ENCODE measurements at regions of chr22 and their contacts with region 1.

Region 1: DNA sequence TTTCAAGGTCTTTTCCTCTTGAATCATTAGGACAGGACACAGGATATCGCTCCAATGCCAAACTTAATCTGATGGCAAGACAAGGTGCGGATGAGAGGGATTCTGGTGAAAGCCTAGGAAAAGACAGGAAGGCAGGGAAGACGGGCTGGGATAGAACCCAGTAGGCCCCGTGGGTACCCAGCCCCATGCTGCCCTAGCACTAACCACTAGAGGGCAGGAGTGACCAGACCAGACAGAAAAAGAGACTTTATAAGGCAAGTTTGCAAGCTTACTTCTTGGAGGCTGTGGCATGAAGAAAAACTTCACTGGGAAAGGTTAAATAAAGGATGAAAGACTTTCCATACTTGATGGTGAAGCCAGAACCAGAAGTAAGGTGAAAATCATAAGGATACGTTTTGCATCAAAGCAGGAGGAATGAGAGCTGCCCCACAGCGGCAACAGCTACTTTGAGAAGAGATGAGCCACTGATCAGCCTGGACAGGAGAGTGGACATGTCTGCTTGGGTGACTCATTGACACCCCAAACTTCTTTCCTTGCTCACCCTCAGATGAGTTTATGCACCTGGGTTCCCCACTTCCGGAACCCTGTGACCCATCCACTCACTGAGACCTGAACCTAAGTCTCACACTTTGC is 39.8 kb downstream of the SYN3 start:
- DNase-seq: no peak
- H3K4me3 ChIP-seq: no peak overlapping the region
- CTCF ChIP-seq: peak; percentile 78

Region 2: DNA sequence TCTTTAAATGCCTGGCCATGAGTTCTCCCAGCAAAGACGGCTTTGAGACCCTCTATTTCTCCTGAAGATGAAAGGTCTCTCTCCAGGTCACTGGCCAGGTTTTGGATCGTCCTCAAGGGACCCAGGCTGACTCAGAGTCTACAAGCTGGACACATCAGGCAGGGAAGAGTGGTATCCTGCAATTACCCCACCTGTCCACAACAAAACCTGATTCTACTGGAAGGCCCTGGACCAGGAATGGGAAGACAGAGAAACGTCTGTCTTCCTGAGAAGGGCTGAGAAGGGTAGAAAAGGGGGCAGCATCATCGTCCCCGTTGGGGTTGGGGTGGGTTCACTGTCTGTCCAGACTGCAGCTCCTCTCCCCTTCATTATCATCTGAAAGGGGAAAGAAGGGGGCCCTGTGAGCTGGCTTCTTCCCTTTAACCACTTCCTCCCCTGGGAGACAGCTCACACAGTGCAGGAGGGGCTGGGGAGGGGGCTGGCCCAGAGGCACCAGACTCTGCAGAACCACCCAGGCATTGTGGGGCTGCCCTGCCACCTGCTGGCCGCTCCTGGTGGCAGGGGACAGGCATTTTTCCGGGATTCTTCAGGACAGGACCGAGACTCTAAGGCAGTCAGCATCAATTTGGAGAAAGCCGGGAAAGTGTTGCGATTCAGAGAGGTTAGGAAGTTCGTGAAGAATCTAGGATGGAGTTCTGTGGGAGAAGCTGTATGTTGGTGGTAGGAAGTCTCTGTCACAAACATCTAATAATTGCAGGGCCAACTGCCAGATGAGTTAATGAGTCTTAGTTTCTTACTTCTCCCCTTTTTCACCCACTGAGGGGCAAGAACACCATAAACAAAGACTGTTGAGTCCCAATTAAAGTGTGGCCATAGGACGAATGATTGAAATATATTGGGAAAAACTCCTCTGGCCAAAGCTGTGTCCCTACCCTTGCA is 17.7 kb before region 1 on chr22:
- CTCF ChIA-PET with region 1: interaction called, 19 read pairs
- POLR2A ChIA-PET with region 1: no interaction called
- DNase-seq: no peak
- H3K4me3 ChIP-seq: no peak overlapping the region
- CTCF ChIP-seq: peak; percentile 96

Region 3: GRCh38 chr22:33006220-33006954 is 12.0 kb before region 1 on chr22:
- CTCF ChIA-PET with region 1: interaction called, 19 read pairs
- POLR2A ChIA-PET with region 1: no interaction called
- DNase-seq: no peak
- H3K4me3 ChIP-seq: no peak overlapping the region
- CTCF ChIP-seq: no peak

Region 4: DNA sequence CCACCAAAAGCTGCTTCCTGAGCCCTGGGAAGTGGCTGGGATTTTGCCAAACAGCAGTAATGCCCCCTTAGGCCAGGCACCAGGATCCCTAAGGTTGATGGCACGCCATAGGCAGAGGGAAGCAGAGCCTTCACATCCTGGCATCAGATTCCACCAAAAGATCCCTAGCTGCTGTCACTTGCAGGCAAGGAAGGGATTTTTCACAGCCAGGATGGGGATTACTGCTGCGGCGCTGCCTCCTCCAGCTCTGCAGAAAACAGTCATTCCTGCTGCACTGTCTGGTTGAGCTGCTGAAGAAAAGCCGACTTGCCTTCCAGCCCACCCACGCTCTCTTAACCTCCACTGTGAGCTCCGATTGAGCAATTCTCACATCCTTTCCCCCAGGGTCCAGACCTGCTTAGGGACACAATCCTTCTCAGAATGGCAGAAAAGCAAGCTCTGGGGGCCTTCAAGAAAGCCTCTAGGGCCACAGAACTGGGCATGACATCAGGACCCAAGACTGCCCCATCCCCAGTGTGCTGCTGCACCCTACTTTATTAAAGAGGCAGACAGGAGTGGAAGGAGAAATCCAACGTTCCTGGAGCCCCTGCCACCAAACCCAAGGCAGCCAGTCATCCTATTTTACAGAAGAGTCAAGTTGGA is 19.9 kb after region 1 on chr22:
- CTCF ChIA-PET with region 1: interaction called, 16 read pairs
- POLR2A ChIA-PET with region 1: no interaction called
- DNase-seq: no peak
- H3K4me3 ChIP-seq: no peak overlapping the region; the same call in 1 of the 2 replicates
- CTCF ChIP-seq: no peak

Region 5: DNA sequence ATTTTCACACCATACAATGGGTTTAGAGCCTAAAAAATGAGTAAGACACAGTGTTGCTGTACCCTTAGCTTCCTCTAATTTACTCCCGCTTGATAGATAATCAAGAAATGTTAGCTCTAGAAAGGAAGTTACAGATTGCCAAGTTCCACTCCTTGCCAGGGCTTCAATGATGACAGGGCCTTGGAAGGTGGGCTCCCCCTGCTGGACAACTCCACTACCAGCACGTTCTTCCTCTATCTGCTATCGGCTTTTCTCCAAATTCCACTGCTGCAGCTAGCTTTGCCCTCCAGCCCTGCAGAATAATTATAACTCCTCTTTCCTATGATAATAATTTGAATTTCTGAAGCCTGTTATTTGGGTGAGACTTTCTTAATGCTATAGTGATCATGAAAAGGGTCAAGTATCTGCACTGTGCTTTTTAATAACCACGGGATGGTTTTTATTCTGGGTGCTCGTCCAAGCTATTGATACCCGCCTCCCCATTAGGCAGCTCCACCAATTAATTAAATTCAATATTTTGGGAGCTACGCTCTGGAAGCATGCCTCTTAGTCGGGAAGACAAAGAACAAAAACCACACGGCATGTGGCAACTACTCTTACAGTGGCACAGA is 30.9 kb after region 1 on chr22:
- CTCF ChIA-PET with region 1: interaction called, 35 read pairs
- POLR2A ChIA-PET with region 1: no interaction called
- DNase-seq: no peak
- H3K4me3 ChIP-seq: no peak overlapping the region
- CTCF ChIP-seq: peak; percentile 89

Region 6: GRCh38 chr22:33209930-33210784 is 191.8 kb after region 1 on chr22:
- CTCF ChIA-PET with region 1: interaction called, 17 read pairs
- POLR2A ChIA-PET with region 1: no interaction called
- DNase-seq: no peak
- H3K4me3 ChIP-seq: no peak overlapping the region
- CTCF ChIP-seq: peak; percentile 51

Measured in AG04449 (cell line).